Activated CD8-positive, alpha-beta memory T cell treated with anti-CD3 and anti-CD28 coated beads, Interleukin-2, amount 10 ng/mL, durations not matched to agents 7 days and 5 days (primary cell): ENCODE measurements at regions of chr2 and their contacts with region 1.

Region 1: GRCh38 chr2:174697255-174697654 is 67.0 kb downstream of the CHRNA1 start:
- DNase-seq: peak; percentile 82
- ATAC-seq: peak; percentile 98
- H3K4me3 Mint-ChIP-seq: no peak overlapping the region
- H3K27ac Mint-ChIP-seq: no peak overlapping the region
- H3K4me1 Mint-ChIP-seq: no peaks in the 10 kb centered on the region
- H3K27me3 Mint-ChIP-seq: peaks cover 26% of the 10 kb centered on the region

Region 2: GRCh38 chr2:174487108-174487819 is 210.0 kb before region 1 on chr2:
- CTCF ChIA-PET with region 1: no interaction called
- DNase-seq: peak; percentile 100
- ATAC-seq: peak; percentile 92
- H3K4me3 Mint-ChIP-seq: peak overlapping the region; percentile 95
- H3K27ac Mint-ChIP-seq: peak overlapping the region; percentile 79
- H3K4me1 Mint-ChIP-seq: peaks cover 59% of the 10 kb centered on the region
- H3K27me3 Mint-ChIP-seq: no peaks in the 10 kb centered on the region

Region 3: GRCh38 chr2:174682578-174683391 is 14.5 kb before region 1 on chr2:
- CTCF ChIA-PET with region 1: interaction called, 64 read pairs
- DNase-seq: peak; percentile 70
- ATAC-seq: peak; percentile 80
- H3K4me3 Mint-ChIP-seq: peak overlapping the region; percentile 83
- H3K27ac Mint-ChIP-seq: peak overlapping the region; percentile 87
- H3K4me1 Mint-ChIP-seq: peaks cover 63% of the 10 kb centered on the region
- H3K27me3 Mint-ChIP-seq: no peaks in the 10 kb centered on the region

Region 4: GRCh38 chr2:174717273-174717672 is 20.0 kb after region 1 on chr2:
- CTCF ChIA-PET with region 1: interaction called, 22 read pairs
- DNase-seq: peak; percentile 58
- ATAC-seq: peak; percentile 77
- H3K4me3 Mint-ChIP-seq: peak overlapping the region; percentile 45
- H3K27ac Mint-ChIP-seq: peak overlapping the region; percentile 66
- H3K4me1 Mint-ChIP-seq: peaks cover 33% of the 10 kb centered on the region
- H3K27me3 Mint-ChIP-seq: no peaks in the 10 kb centered on the region

Region 5: GRCh38 chr2:174748948-174749347 is 51.7 kb after region 1 on chr2:
- CTCF ChIA-PET with region 1: interaction called, 111 read pairs
- DNase-seq: peak; percentile 79
- ATAC-seq: peak; percentile 48
- H3K4me3 Mint-ChIP-seq: no peak overlapping the region
- H3K27ac Mint-ChIP-seq: no peak overlapping the region
- H3K4me1 Mint-ChIP-seq: peaks cover 38% of the 10 kb centered on the region
- H3K27me3 Mint-ChIP-seq: peaks cover 14% of the 10 kb centered on the region

Region 6: GRCh38 chr2:174985630-174986029 is 288.4 kb after region 1 on chr2:
- CTCF ChIA-PET with region 1: interaction called, 18 read pairs
- DNase-seq: no peak
- ATAC-seq: no peak
- H3K4me3 Mint-ChIP-seq: no peak overlapping the region
- H3K27ac Mint-ChIP-seq: no peak overlapping the region
- H3K4me1 Mint-ChIP-seq: peaks cover 3% of the 10 kb centered on the region
- H3K27me3 Mint-ChIP-seq: peaks cover 6% of the 10 kb centered on the region